HCT116 (cell line): ENCODE measurements at regions of chr6 and their contacts with region 1.

Region 1: GRCh38 chr6:37946057-37946456 is 126.5 kb downstream of the ZFAND3 start:
- DNase-seq: no peak
- ATAC-seq: no peak
- H3K4me3 ChIP-seq: no peak overlapping the region
- H3K27ac ChIP-seq: no peak overlapping the region
- H3K4me1 ChIP-seq: no peaks in the 10 kb centered on the region
- H3K27me3 ChIP-seq: no peaks in the 10 kb centered on the region
- CTCF ChIP-seq: no peak
- POLR2A ChIP-seq: no peak
- RAD21 ChIP-seq: no peak

Region 2: DNA sequence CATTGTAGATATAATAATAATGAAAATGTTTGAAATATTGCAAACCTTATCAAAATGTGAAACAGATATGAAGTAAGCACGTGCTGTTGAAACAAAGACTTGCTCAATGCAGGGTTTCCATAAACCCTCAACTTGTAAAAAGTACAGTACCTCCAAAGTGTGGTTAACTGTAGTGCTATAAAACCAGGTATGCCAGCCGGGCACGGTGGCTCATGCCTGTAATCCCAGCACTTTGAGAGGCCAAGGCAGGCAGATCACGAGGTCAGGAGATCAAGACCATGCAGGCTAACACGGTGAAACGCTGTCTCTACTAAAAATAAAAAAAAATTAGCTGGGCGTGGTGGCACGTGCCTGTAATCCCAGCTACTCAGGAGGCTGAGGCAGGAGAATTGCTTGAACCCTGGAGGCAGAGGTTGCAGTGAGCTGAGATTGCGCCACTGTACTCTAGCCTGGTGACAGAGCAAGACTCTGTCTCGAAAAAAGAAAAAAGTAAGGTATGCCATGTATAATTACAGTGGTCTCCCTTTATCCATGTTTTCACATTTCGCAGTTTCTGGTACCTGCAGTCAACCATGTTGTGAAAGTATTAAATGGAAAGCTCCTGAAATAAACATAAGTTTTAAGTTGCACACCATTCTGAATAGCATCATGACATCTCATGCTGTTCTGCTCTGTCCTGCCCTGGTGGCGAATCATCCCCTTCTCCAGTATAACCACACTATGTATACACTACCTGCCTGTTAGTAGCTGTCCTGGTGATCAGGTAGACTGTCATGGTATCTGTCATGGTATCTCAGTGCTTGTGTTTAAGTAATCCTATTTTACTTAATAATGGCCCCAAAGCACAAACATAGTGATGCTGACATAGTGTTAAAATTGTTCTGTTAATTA is 29.6 kb before region 1 on chr6:
- CTCF ChIA-PET with region 1: no interaction called
- POLR2A ChIA-PET with region 1: no interaction called
- RAD21 ChIA-PET with region 1: no interaction called
- intact Hi-C with region 1: loop called (anchors 1 kb)
- DNase-seq: no peak
- ATAC-seq: no peak
- H3K4me3 ChIP-seq: no peak overlapping the region
- H3K27ac ChIP-seq: no peak overlapping the region
- H3K4me1 ChIP-seq: no peaks in the 10 kb centered on the region
- H3K27me3 ChIP-seq: no peaks in the 10 kb centered on the region
- CTCF ChIP-seq: no peak
- POLR2A ChIP-seq: no peak
- RAD21 ChIP-seq: no peak